H1 (cell line): ENCODE measurements at regions of chr17 and their contacts with region 1.

Region 1: DNA sequence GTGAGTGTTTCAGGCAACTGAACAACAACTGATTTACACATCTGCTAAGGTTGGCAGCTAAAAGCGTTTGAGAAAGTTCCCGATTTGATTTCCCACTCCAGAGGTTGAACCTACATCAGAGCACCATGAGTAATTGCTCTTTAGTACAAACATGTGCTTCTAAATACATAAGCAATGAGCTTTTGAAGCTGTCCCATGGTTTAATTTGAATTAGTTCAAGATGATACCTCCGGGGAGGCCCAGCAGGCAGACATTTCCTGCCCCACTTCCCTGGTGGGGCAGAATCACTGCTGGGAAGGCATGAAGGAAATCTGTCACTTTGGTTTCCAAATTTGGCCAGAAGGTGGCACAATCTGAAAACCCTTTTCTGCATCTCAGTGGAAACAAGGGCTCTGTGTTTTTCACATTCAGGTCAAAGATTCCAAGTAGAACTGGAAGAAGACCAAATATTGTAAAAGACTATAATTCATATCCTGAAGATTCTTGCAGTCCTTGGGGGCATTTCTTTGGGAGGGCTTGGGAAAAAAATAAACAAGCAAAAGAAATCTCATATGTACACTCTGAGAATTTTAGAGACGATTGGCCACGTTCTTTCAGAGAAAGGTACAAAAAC is 176.2 kb upstream of the FAM20A start:
- DNase-seq: peak in 1 of 2 experiments; percentile 78
- H3K4me3 ChIP-seq: no peak overlapping the region
- H3K27ac ChIP-seq: no peak overlapping the region
- H3K4me1 ChIP-seq: no peaks in the 10 kb centered on the region
- H3K27me3 ChIP-seq: no peaks in the 10 kb centered on the region
- CTCF ChIP-seq: peak; percentile 8 to 82 (median 63)
- EP300 ChIP-seq: no peak
- POLR2A ChIP-seq: no peak
- RAD21 ChIP-seq: peak; percentile 83 to 85

Region 2: DNA sequence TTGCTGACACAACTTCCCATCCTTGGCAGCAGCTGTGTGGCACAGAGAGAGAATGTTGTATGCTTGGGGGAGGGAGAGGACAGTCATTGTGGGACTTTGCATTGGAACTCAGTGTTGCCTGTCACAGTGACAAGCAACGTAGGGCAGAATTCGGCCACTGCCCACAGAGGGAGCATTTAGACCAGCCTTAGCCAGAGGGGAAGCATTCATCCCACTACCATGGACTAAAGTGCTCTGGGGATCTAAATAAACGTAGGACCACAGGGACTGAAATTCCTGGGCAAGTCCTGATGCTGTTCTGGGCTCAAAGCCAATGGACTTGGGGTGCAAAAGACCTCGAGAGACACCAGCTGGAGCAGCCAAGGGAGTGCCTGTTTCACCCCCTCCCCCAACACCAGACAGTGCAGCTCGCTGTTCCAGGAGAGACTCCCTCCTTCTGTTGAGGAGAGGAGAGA is 132.9 kb after region 1 on chr17:
- CTCF ChIA-PET with region 1: interaction called, 31 read pairs
- POLR2A ChIA-PET with region 1: interaction called, 3 read pairs
- DNase-seq: no peak
- H3K4me3 ChIP-seq: no peak overlapping the region
- H3K27ac ChIP-seq: no peak overlapping the region
- H3K4me1 ChIP-seq: no peaks in the 10 kb centered on the region
- H3K27me3 ChIP-seq: no peaks in the 10 kb centered on the region
- CTCF ChIP-seq: peak in 1 of 3 experiments; percentile 3; a peak in 1 of 4 replicates
- EP300 ChIP-seq: no peak
- POLR2A ChIP-seq: no peak
- RAD21 ChIP-seq: peak; percentile 15 to 32; a peak in 3 of 4 replicates

Region 3: DNA sequence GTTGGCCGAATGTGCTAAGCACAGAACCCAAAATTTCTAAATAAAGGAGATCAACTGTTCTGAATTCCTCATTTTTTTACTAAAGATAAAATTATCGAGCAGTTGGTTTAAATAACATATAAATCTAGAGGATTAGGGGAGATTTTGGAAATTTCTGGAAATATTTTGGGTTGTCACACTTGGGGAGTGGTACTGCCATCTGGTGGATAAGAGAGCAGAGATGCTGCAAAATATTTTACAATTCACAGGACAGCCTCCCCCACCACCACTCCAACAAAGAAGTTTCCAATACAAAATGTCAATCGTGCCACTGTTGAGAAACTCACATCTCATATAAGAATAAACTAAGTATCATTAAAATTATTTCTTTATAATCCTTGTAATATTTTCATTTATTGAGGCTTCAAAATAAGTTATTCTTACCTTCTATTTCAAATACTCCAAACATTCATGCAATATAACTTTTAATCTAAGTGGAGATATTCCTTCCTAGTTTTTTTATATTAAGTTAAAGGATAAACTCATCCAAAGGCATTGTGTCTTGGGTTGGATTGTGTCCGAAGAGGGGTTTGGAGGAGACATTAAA is 194.9 kb after region 1 on chr17:
- CTCF ChIA-PET with region 1: interaction called, 21 read pairs
- POLR2A ChIA-PET with region 1: no interaction called
- DNase-seq: no peak
- H3K4me3 ChIP-seq: no peak overlapping the region
- H3K27ac ChIP-seq: no peak overlapping the region
- H3K4me1 ChIP-seq: no peaks in the 10 kb centered on the region
- H3K27me3 ChIP-seq: no peaks in the 10 kb centered on the region
- CTCF ChIP-seq: peak in 2 of 3 experiments; percentile 45 to 56; a peak in 3 of 4 replicates
- EP300 ChIP-seq: no peak
- POLR2A ChIP-seq: no peak
- RAD21 ChIP-seq: peak; percentile 68 to 74

Region 4: DNA sequence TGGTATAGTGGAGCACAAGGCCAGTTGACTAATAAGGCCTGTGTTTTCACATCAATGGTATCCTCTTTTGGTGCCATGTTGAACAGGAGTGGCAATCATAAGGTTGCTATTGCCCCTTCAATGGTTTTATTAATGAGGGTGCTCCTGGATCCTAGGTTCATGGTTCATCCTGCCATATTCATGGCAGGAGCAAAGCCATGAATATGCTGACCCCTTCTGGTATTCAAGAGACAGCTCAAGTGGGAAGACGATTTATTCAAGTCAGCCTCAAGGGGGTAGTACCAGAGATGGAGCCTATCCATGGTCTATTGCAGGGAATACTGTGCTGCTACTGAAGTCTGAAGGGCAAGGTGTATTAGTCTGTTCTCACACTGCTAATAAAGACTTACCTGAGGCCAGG is 280.8 kb after region 1 on chr17:
- CTCF ChIA-PET with region 1: interaction called, 24 read pairs
- POLR2A ChIA-PET with region 1: no interaction called
- DNase-seq: no peak
- H3K4me3 ChIP-seq: no peak overlapping the region
- H3K27ac ChIP-seq: no peak overlapping the region
- H3K4me1 ChIP-seq: no peaks in the 10 kb centered on the region; a peak in 1 of 7 replicates
- H3K27me3 ChIP-seq: no peaks in the 10 kb centered on the region
- CTCF ChIP-seq: peak in 2 of 3 experiments; percentile 76 to 98; a peak in 3 of 4 replicates
- EP300 ChIP-seq: no peak
- POLR2A ChIP-seq: no peak
- RAD21 ChIP-seq: peak; percentile 72 to 81

Region 5: DNA sequence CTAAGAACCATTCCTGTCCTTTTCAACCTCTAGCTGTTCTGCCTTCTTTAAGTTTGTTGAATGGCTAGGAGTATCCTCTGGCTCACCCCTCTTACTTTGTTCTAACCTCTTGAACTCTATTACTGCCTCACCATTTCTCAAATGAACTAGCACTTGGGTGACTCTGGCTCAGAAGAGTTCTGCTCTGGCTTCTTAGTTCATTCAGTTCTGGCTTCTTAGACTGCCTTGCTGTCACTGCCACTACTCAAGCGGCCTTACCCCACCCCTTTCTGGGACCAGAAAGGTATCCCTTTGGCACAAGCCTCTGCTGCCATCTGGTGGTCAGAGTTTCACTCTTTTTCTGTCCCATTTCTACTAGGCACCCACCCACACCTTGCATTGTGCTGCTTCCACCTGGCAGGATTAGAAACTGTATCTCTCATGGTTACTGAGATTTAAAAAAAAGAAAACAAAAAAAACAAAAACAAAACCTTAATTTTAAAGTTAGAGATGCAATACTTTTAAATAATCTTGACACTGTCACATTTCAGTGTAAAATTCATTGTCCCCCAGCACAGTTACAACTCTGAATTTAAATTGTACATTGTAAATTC is 458.1 kb after region 1 on chr17:
- CTCF ChIA-PET with region 1: interaction called, 37 read pairs
- POLR2A ChIA-PET with region 1: no interaction called
- DNase-seq: peak; percentile 57 to 91
- H3K4me3 ChIP-seq: no peak overlapping the region
- H3K27ac ChIP-seq: no peak overlapping the region
- H3K4me1 ChIP-seq: no peaks in the 10 kb centered on the region
- H3K27me3 ChIP-seq: no peaks in the 10 kb centered on the region
- CTCF ChIP-seq: peak; percentile 53 to 94 (median 83)
- EP300 ChIP-seq: no peak
- POLR2A ChIP-seq: no peak
- RAD21 ChIP-seq: peak; percentile 96 to 97

Region 6: GRCh38 chr17:69246726-69247375 is 469.5 kb after region 1 on chr17:
- CTCF ChIA-PET with region 1: interaction called, 23 read pairs
- POLR2A ChIA-PET with region 1: no interaction called
- DNase-seq: no peak
- H3K4me3 ChIP-seq: no peak overlapping the region
- H3K27ac ChIP-seq: no peak overlapping the region
- H3K4me1 ChIP-seq: no peaks in the 10 kb centered on the region
- H3K27me3 ChIP-seq: no peaks in the 10 kb centered on the region
- CTCF ChIP-seq: peak in 2 of 3 experiments; percentile 34 to 51; a peak in 2 of 4 replicates
- EP300 ChIP-seq: no peak
- POLR2A ChIP-seq: no peak
- RAD21 ChIP-seq: peak; percentile 60 to 66